Posterior vena cava (tissue), 2 donors: ENCODE measurements at regions of chr1 and their contacts with region 1.

Region 1: DNA sequence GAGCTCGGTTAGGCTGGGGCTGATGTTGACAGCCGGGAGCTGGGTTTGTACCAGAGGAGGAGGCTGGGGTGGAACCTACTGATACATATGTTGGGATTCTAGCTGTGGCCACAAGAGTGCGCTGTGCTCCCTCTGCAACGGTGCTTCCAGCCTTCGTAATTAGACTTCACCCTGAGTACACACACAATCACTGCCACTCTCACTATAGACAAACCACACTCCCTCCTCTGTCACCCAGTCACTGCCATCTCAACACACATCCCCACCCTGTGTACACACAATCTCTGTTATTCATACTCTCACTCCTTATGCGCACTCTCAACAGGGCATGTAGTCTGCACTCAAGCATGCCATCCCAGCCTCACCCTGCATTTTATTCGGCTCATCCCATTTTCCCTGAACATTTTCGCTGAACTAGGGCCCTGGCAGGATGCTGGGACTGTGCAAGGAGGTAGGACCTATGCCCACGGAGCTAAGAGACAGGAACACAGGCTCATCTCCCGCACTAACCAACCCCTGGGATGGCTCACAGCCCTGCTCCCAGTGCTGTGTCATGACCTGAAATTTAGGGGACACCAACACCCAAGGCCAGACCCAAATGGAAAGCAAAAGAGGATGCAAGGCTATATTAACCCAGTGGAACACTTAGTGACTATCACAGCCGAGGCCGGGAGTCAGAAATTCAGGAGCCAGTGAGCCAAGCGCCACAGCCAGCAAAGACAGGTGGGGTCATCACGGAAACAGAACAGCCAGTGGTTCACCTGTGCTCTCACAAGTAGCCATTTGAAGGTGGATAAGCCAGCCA is 5.7 kb downstream of the GJB3 start:
- DNase-seq: peak; percentile 90

Region 2: DNA sequence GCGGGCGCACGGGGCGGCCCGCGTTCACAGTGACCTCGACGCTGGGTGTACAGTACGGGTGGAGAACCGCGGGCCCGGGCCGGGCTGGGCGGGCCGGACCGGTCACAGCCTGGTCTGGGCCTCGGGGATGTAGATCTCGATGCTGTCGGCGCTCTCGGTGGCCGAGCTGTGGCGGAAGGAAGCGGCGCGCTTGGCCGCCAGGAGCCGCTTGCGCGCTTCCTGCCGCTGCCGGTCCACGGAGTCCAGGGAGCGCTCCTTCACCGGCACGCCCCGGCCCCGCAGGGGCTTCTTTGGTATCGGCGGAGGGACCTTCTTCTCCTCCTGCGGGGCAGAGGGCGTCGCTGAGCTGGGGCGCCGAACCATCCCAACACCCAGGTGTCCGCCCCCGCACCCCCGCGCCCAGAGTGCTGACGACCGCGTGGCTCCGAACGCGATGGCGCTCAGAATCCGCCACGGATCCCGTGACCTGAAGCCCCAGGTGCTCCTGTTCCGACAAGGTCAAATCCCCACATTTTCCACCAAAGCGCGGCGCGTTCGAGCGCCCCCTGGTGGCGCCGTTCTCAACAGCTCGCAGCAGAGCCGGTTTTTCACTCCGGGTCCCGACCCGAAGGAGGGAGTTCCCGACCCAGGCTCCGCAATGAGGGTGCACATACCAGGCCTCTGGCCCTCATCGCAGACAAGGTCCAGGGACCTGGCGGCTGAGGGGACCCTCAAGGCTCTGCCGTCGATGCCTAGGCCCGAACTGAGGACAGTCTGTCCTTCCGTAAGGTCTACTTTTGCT is 79.4 kb after region 1 on chr1:
- intact Hi-C with region 1: loop called in 1 of 2 experiments (anchors 5 kb)
- DNase-seq: peak; percentile 97